ENCODE measurements at regions of chr6 and their contacts with region 1.

Region 1: GRCh38 chr6:14573703-14574306 is 456.2 kb downstream of the CD83 start:
- DNase-seq: no peak
- H3K4me3 ChIP-seq: no peak overlapping the region
- H3K27ac ChIP-seq: no peak overlapping the region
- H3K4me1 ChIP-seq: no peaks in the 10 kb centered on the region
- H3K27me3 ChIP-seq: no peaks in the 10 kb centered on the region
- CTCF ChIP-seq: no peak
- POLR2A ChIP-seq: no peak

Region 2: DNA sequence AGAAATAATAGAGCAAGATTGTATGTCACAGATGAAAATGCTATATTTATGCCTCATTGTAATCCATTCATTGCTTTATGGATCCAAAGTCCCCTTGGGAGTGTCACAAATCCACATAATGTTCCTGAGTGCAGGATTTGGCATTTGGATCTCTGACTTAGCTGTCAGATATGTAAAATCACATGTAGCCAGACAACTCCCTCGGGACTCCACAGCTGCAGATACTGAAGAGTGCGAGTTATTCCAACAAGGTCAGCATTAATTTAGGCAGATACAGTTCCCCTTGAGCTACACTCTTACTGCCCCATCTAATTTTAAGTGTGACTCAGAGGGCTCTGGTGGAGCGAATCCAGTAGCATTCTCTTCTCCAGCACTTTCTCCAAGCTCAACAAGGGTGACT is 23.0 kb before region 1 on chr6:
- intact Hi-C with region 1: loop called (anchors 1 kb)
- DNase-seq: no peak
- H3K4me3 ChIP-seq: no peak overlapping the region
- H3K27ac ChIP-seq: no peak overlapping the region
- H3K4me1 ChIP-seq: no peaks in the 10 kb centered on the region
- H3K27me3 ChIP-seq: no peaks in the 10 kb centered on the region
- CTCF ChIP-seq: no peak
- POLR2A ChIP-seq: no peak

Region 3: DNA sequence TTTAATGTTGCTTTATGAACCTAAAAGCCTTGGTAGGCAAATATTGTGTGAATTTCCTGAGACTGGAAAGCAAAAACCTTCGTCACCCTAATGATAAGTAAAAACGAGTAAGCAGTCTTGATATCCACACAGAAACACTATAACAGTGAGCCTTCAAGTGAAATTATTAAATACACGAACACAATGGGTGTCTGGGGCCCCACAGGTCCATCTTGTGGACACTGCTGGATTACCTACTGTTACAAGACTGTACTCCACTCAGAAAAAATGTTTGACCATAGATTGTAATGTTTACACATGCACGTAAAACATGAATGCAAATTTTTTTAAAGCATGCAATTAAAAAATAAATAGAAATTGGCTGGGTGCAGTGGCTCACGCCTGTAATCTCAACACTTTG is 10.6 kb after region 1 on chr6:
- intact Hi-C with region 1: loop called (anchors 1 kb)
- DNase-seq: no peak
- H3K4me3 ChIP-seq: no peak overlapping the region
- H3K27ac ChIP-seq: no peak overlapping the region
- H3K4me1 ChIP-seq: no peaks in the 10 kb centered on the region
- H3K27me3 ChIP-seq: no peaks in the 10 kb centered on the region
- CTCF ChIP-seq: peak in 1 of 3 donors; percentile 20
- POLR2A ChIP-seq: no peak

Region 4: GRCh38 chr6:14658886-14659561 is 85.2 kb after region 1 on chr6:
- intact Hi-C with region 1: no loop called
- DNase-seq: peak in 1 of 2 donors; percentile 26
- H3K4me3 ChIP-seq: no peak overlapping the region
- H3K27ac ChIP-seq: no peak overlapping the region
- H3K4me1 ChIP-seq: no peaks in the 10 kb centered on the region
- H3K27me3 ChIP-seq: no peaks in the 10 kb centered on the region
- CTCF ChIP-seq: no peak
- POLR2A ChIP-seq: no peak

Region 5: DNA sequence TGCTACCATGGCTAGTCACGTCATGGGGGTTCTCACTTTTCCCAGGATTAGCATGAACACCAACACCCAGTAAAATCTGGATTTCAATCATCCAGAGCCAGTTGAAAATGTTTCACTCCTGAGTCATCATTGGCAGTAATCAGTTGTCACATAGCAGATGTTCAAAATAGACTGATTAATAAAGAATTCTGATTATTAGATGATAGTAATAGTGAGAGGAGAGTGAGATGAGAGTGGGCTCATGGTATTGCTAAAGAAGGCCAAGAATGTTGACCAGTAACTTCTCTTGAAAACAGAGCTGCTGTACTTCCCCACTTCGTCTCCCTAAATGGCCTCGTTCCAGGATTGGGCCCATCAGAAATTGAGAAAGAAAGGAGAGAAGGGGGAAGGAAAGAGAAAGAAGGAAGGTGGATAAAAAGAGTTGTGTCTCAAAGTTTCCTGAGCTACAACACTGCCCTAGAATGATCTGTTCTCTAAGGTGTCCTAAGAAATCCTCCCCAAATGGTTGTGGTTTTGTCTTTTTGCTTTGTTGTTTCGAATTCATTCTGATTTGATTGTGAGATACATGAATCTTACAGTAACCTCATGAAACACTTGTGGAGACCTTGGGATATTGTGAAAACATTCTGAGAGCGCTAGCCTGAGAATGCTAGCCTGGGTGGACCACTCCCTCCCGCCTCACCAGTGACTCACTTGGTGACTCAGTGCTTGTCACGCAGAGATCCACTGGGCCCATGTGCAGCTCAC is 169.8 kb after region 1 on chr6:
- intact Hi-C with region 1: no loop called
- DNase-seq: peak in 1 of 2 donors; percentile 24
- H3K4me3 ChIP-seq: no peak overlapping the region
- H3K27ac ChIP-seq: peak overlapping the region in 1 of 2 donors; percentile 58
- H3K4me1 ChIP-seq: no peaks in the 10 kb centered on the region
- H3K27me3 ChIP-seq: no peaks in the 10 kb centered on the region
- CTCF ChIP-seq: no peak
- POLR2A ChIP-seq: no peak